ENCODE measurements at regions of chr1 and their contacts with region 1.

Region 1: DNA sequence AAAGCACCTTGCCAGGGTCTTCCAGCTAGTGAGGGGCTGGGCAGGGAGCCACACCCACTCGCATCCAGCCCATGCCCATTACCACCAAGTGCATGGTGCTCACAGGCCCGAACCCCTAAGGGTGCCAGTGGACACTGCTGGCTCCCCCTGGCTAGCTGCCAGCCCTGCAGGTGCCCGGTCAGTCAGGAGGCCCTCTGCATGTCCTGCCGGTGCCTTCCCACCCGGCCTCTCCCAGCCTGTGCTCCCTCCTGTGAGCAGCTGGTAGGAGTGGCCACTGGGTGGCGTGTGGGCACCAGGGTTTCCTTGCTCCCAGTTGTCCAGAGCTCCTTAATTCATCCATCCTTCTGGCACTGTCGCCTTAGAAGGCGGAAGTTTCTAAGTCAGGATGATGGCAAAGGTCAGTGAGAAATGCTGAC is 33.4 kb downstream of the QSOX1 start:
- DNase-seq: peak; percentile 74
- H3K4me3 Mint-ChIP-seq: no peak overlapping the region
- H3K27ac Mint-ChIP-seq: no peak overlapping the region
- H3K4me1 Mint-ChIP-seq: no peaks in the 10 kb centered on the region
- H3K27me3 Mint-ChIP-seq: no peaks in the 10 kb centered on the region
- CTCF ChIP-seq: peak; percentile 57

Region 2: GRCh38 chr1:179888071-179888470 is 300.0 kb before region 1 on chr1:
- CTCF ChIA-PET with region 1: no interaction called
- POLR2A ChIA-PET with region 1: no interaction called
- intact Hi-C with region 1: no loop called
- DNase-seq: no peak
- H3K4me3 Mint-ChIP-seq: no peak overlapping the region
- H3K27ac Mint-ChIP-seq: no peak overlapping the region
- H3K4me1 Mint-ChIP-seq: peaks cover 19% of the 10 kb centered on the region
- H3K27me3 Mint-ChIP-seq: no peaks in the 10 kb centered on the region
- CTCF ChIP-seq: no peak

Region 3: DNA sequence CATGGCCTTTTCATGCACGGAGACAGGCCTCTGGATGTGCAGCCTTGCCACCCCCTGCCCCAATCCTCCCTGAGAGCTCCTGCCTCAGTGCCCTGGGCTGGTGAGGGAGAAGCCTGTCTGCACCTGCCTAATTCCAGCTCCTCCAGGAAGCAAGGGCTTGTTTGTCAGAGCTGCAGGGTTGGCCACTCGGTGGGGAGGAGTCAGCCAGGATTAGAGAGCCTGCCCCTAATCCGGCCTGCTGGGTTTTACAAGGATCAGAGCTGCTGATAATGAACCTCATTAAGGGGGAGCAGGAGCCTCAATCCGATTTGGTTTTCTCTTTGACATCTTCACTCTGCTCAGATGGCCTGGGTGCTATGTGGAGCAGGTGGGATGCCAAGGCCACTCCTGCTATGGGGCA is 10.1 kb after region 1 on chr1:
- CTCF ChIA-PET with region 1: interaction called, 79 read pairs
- POLR2A ChIA-PET with region 1: no interaction called
- intact Hi-C with region 1: no loop called
- DNase-seq: peak; percentile 14
- H3K4me3 Mint-ChIP-seq: no peak overlapping the region
- H3K27ac Mint-ChIP-seq: no peak overlapping the region
- H3K4me1 Mint-ChIP-seq: no peaks in the 10 kb centered on the region
- H3K27me3 Mint-ChIP-seq: no peaks in the 10 kb centered on the region
- CTCF ChIP-seq: no peak

Region 4: GRCh38 chr1:180224902-180225301 is 36.8 kb after region 1 on chr1:
- CTCF ChIA-PET with region 1: interaction called, 12 read pairs
- POLR2A ChIA-PET with region 1: no interaction called
- intact Hi-C with region 1: no loop called
- DNase-seq: no peak
- H3K4me3 Mint-ChIP-seq: no peak overlapping the region
- H3K27ac Mint-ChIP-seq: no peak overlapping the region
- H3K4me1 Mint-ChIP-seq: no peaks in the 10 kb centered on the region
- H3K27me3 Mint-ChIP-seq: peaks cover 68% of the 10 kb centered on the region
- CTCF ChIP-seq: no peak

Region 5: GRCh38 chr1:180415985-180416633 is 228.0 kb after region 1 on chr1:
- CTCF ChIA-PET with region 1: interaction called, 30 read pairs
- POLR2A ChIA-PET with region 1: no interaction called
- intact Hi-C with region 1: loop called (anchors 2 kb)
- DNase-seq: peak; percentile 49
- H3K4me3 Mint-ChIP-seq: no peak overlapping the region
- H3K27ac Mint-ChIP-seq: no peak overlapping the region
- H3K4me1 Mint-ChIP-seq: no peaks in the 10 kb centered on the region
- H3K27me3 Mint-ChIP-seq: no peaks in the 10 kb centered on the region
- CTCF ChIP-seq: peak; percentile 65

Measured in MCF 10A (cell line).